Activated CD4-positive, alpha-beta T cell treated with anti-CD3 and anti-CD28 coated beads for 36 hours (primary cell): ENCODE measurements at regions of chr20 and their contacts with region 1.

Region 1: DNA sequence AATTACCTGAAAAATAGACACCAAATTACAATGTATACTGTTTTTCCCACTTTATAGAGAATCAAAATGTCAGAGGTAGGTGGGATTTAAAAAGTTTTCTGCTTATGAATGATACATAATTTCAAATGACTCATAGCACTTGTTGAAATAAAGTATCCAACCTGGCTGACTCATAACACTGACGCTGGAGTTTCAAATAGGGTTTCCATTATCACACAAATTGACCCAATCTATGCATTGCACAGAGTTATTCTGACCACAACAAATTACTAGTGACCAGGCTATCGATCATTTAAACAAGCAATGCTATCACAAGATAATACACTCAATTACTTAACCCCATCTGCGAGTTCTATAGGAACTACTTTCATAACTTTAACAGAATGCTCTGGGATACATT is 31.9 kb upstream of the PRELID3B start:
- DNase-seq: peak; percentile 31
- ATAC-seq: peak; percentile 79
- H3K4me3 Mint-ChIP-seq: no peak overlapping the region
- H3K27ac Mint-ChIP-seq: no peak overlapping the region
- H3K4me1 Mint-ChIP-seq: peaks cover 52% of the 10 kb centered on the region
- H3K27me3 Mint-ChIP-seq: peaks cover 18% of the 10 kb centered on the region

Region 2: DNA sequence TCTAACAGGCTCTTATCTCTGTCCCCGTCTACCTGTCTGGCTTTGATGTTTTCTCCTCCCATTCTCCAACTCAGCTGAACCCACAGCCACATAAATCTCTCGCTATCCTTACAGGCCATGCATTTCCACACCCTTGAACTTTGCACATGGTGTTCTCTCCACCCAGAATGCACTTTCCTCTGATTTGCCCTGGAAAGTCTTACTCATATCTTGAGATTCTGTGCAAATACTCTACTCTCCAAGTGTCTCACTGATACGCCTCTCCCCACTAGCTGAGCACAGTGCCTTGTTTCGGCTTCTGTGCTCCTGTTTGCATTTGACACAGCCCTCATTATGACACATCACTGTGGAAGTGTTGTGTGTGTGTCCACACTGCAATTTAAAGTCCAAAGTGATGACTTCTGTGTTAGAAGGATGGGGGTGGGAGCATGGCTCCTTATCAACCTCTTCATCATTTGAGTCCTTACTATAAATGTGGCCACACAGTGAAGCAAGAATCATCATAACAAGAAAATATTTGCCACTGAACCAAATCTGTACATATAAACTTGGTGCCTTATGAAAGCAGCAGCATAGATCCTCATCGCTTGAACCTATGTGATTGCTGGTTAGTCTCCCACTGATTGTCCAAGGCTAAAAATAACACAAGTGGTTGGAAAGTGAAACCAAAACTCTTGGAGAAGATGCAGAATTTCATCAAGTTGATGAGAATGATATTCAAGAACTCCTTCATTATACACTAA is 26.3 kb before region 1 on chr20:
- CTCF ChIA-PET with region 1: interaction called, 3 read pairs
- POLR2A ChIA-PET with region 1: no interaction called
- intact Hi-C with region 1: loop called in 1 of 2 experiments (anchors 1 kb)
- DNase-seq: peak; percentile 59
- ATAC-seq: peak; percentile 90
- H3K4me3 Mint-ChIP-seq: no peak overlapping the region
- H3K27ac Mint-ChIP-seq: peak overlapping the region; percentile 44
- H3K4me1 Mint-ChIP-seq: peaks cover 27% of the 10 kb centered on the region
- H3K27me3 Mint-ChIP-seq: peaks cover 1% of the 10 kb centered on the region